Activated CD4-positive, alpha-beta T cell treated with anti-CD3 and anti-CD28 coated beads for 36 hours (primary cell): ENCODE measurements at regions of chr9 and their contacts with region 1.

Region 1: GRCh38 chr9:35814841-35815543 is at the start of gene HINT2:
- DNase-seq: peak; percentile 99
- ATAC-seq: peak; percentile 85
- H3K4me3 Mint-ChIP-seq: peak within 1 kb of the TSS; percentile 93
- H3K27ac Mint-ChIP-seq: peak within 1 kb of the TSS; percentile 98
- H3K4me1 Mint-ChIP-seq: peaks cover 33% of the 10 kb centered on the region
- H3K27me3 Mint-ChIP-seq: no peaks in the 10 kb centered on the region
- total RNA-seq, gene HINT2: 47.4 to 61.1 TPM

Region 2: GRCh38 chr9:35071814-35072460 is 743.1 kb before region 1 on chr9:
- CTCF ChIA-PET with region 1: no interaction called
- POLR2A ChIA-PET with region 1: interaction called, 3 read pairs
- intact Hi-C with region 1: loop called in 1 of 2 experiments (anchors 1 kb)
- DNase-seq: peak; percentile 83
- ATAC-seq: peak; percentile 47
- H3K4me3 Mint-ChIP-seq: peak overlapping the region; percentile 91
- H3K27ac Mint-ChIP-seq: peak overlapping the region; percentile 95
- H3K4me1 Mint-ChIP-seq: peaks cover 56% of the 10 kb centered on the region
- H3K27me3 Mint-ChIP-seq: no peaks in the 10 kb centered on the region

Region 3: GRCh38 chr9:35436933-35437332 is 378.1 kb before region 1 on chr9:
- CTCF ChIA-PET with region 1: no interaction called
- POLR2A ChIA-PET with region 1: no interaction called
- intact Hi-C with region 1: no loop called
- DNase-seq: no peak
- ATAC-seq: no peak
- H3K4me3 Mint-ChIP-seq: no peak overlapping the region
- H3K27ac Mint-ChIP-seq: no peak overlapping the region
- H3K4me1 Mint-ChIP-seq: no peaks in the 10 kb centered on the region
- H3K27me3 Mint-ChIP-seq: peaks cover 2% of the 10 kb centered on the region

Region 4: DNA sequence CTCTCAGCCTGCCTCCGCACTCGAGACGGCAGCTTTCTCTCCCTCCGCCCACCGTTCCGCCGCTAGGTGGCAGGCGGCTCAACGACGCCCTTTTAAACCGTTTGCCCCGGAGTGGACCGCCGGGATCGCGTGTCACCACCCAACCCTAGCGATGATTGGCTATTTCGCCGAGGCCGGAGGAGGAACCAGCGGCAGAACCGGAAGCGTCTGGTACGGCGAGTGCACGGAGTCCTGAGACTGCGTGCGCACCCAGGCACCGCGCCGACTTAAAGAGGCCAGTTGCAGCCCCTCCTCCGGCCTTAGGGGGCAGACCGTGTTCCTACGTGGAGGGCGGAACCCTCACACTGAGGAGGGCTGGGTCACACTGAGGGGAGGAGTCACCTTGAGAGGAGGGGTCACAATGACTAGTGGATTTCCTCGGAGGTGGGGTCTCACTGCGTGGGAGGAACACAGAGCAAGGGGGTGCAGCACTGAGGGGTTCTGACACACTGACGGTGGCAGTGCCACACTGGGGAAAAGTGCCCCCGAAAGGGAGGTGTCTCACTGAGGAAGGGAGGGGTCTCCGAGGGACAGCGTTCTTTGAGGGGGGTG is 210.9 kb before region 1 on chr9:
- CTCF ChIA-PET with region 1: no interaction called
- POLR2A ChIA-PET with region 1: no interaction called
- intact Hi-C with region 1: loop called (anchors 1 kb)
- DNase-seq: peak; percentile 100
- ATAC-seq: peak; percentile 93
- H3K4me3 Mint-ChIP-seq: peak overlapping the region; percentile 83
- H3K27ac Mint-ChIP-seq: peak overlapping the region; percentile 96
- H3K4me1 Mint-ChIP-seq: peaks cover 23% of the 10 kb centered on the region
- H3K27me3 Mint-ChIP-seq: no peaks in the 10 kb centered on the region

Region 5: GRCh38 chr9:35718721-35719511 is 96.1 kb before region 1 on chr9:
- CTCF ChIA-PET with region 1: no interaction called
- POLR2A ChIA-PET with region 1: no interaction called
- intact Hi-C with region 1: no loop called
- DNase-seq: no peak
- ATAC-seq: no peak
- H3K4me3 Mint-ChIP-seq: no peak overlapping the region
- H3K27ac Mint-ChIP-seq: no peak overlapping the region
- H3K4me1 Mint-ChIP-seq: no peaks in the 10 kb centered on the region
- H3K27me3 Mint-ChIP-seq: no peaks in the 10 kb centered on the region

Region 6: DNA sequence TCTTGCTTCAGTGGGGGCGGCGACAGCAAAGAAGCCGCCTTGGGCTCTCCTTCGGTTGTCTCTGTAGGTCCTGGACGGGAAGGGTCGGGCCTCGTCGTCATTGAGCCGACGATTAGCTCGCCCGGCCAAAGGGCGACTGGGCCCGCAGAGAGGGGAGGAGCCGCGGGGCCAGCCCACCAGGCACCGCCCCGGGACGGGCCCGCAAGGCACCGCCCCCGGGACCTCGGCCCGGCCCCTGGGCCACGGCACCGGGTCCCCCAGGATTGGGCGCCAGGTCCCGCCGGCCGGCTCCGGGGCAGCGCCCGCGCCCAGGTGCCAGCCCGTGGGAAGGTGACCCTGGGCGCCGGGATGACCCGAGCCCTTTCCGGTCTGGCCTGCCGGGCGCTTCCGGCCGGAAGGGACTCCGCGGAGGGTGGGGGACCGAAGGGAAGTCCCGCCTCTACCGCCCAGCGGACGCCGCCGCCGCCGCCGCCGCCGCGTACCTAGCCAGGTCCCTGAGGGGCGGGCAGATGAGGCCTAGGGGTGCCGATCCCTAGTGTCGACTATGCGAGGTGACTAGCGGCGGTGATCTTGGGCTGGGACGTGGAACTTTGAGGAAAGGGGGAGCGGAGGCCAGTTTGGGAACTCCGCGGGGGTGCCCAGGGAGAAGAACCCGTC is 66.0 kb before region 1 on chr9 and contains the starts of genes GBA2 and RGP1:
- CTCF ChIA-PET with region 1: interaction called, 3 read pairs
- POLR2A ChIA-PET with region 1: no interaction called
- intact Hi-C with region 1: loop called in 1 of 2 experiments (anchors 1 kb)
- DNase-seq: peak; percentile 83
- ATAC-seq: peak; percentile 79
- H3K4me3 Mint-ChIP-seq: peak within 1 kb of the TSS; percentile 93
- H3K27ac Mint-ChIP-seq: peak within 1 kb of the TSS; percentile 88
- H3K4me1 Mint-ChIP-seq: peaks cover 40% of the 10 kb centered on the region
- H3K27me3 Mint-ChIP-seq: no peaks in the 10 kb centered on the region
- total RNA-seq, gene GBA2: 19.6 to 23.7 TPM
- total RNA-seq, gene RGP1: 14.0 to 15.5 TPM

Region 7: DNA sequence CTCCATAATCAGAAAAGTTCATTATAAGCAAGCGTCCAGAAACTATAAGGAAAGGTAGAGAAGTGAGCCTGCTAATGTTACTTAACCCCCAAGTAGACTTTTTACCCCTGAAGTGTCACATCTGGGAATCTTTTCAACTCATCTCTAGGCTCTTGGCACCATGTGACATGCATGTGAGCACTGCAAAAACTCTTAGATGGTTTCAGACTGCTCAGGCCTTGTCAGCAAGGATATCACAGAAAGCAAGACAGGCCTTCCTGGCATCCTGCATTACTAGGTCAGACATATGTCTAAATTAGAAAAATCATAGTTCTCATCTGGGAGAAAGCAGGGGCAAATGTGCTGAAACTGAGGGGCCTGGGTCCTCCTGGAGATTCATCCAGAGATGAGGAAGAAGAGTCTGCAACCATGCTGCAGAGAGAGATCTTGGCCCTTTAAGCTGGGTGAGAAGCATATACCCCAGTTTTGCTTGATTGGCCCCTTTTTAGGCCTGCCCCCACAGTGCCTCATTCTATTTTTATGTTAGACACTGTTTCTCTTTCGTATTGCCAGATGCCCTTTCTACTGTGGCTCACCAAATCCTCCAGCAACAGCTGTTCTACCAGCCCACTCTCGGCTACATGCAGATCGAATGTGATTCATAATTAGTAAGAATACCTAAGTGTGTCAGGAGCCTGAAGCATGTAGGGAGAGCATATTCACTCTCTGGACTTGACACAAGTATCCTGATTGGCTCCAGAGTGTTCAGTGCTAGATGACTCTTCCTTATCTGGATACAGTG is 33.0 kb after region 1 on chr9:
- CTCF ChIA-PET with region 1: interaction called, 3 read pairs
- POLR2A ChIA-PET with region 1: no interaction called
- intact Hi-C with region 1: loop called in 1 of 2 experiments (anchors 1 kb)
- DNase-seq: peak; percentile 73
- ATAC-seq: peak; percentile 96
- H3K4me3 Mint-ChIP-seq: no peak overlapping the region
- H3K27ac Mint-ChIP-seq: peak overlapping the region; percentile 24
- H3K4me1 Mint-ChIP-seq: peaks cover 28% of the 10 kb centered on the region
- H3K27me3 Mint-ChIP-seq: no peaks in the 10 kb centered on the region

Region 8: GRCh38 chr9:36487482-36488388 is 672.7 kb after region 1 on chr9:
- CTCF ChIA-PET with region 1: no interaction called
- POLR2A ChIA-PET with region 1: no interaction called
- intact Hi-C with region 1: loop called in 1 of 2 experiments (anchors 1 kb)
- DNase-seq: peak; percentile 95
- ATAC-seq: peak; percentile 93
- H3K4me3 Mint-ChIP-seq: peak overlapping the region; percentile 93
- H3K27ac Mint-ChIP-seq: peak overlapping the region; percentile 99
- H3K4me1 Mint-ChIP-seq: peaks cover 63% of the 10 kb centered on the region
- H3K27me3 Mint-ChIP-seq: no peaks in the 10 kb centered on the region